ENCODE measurements at regions of chr7 and their contacts with region 1.

Region 1: GRCh38 chr7:2232766-2233520 is at the start of gene MAD1L1:
- DNase-seq: peak; percentile 45 to 92
- H3K4me3 ChIP-seq: peak within 1 kb of the TSS; percentile 81 to 87
- H3K27ac ChIP-seq: peak within 1 kb of the TSS; percentile 39 to 46
- H3K4me1 ChIP-seq: peaks cover 2 to 17% of the 10 kb centered on the region in 2 donors
- H3K27me3 ChIP-seq: no peaks in the 10 kb centered on the region
- CTCF ChIP-seq: no peak
- total RNA-seq, gene MAD1L1: 59.6 TPM

Region 2: GRCh38 chr7:2032030-2032875 is 200.7 kb before region 1 on chr7:
- intact Hi-C with region 1: no loop called
- DNase-seq: peak in 1 of 2 donors; percentile 58
- H3K4me3 ChIP-seq: no peak overlapping the region
- H3K27ac ChIP-seq: no peak overlapping the region
- H3K4me1 ChIP-seq: no peaks in the 10 kb centered on the region
- H3K27me3 ChIP-seq: no peaks in the 10 kb centered on the region
- CTCF ChIP-seq: no peak

Region 3: GRCh38 chr7:2175514-2175913 is 57.4 kb before region 1 on chr7:
- intact Hi-C with region 1: loop called (anchors 5 kb)
- DNase-seq: peak in 1 of 2 donors; percentile 74
- H3K4me3 ChIP-seq: no peak overlapping the region
- H3K27ac ChIP-seq: peak overlapping the region; percentile 15 to 47
- H3K4me1 ChIP-seq: peaks cover 3 to 26% of the 10 kb centered on the region in 2 donors
- H3K27me3 ChIP-seq: no peaks in the 10 kb centered on the region
- CTCF ChIP-seq: no peak